Mammary epithelial cell (primary cell): ENCODE measurements at regions of chr3 and their contacts with region 1.

Region 1: GRCh38 chr3:102229062-102229655 is 205.7 kb upstream of the ZPLD1 start:
- DNase-seq: peak; percentile 71
- H3K4me3 ChIP-seq: no peak overlapping the region
- H3K27ac ChIP-seq: no peak overlapping the region
- H3K4me1 ChIP-seq: peaks cover 2% of the 10 kb centered on the region
- H3K27me3 ChIP-seq: no peaks in the 10 kb centered on the region
- CTCF ChIP-seq: peak; percentile 92 to 97

Region 2: DNA sequence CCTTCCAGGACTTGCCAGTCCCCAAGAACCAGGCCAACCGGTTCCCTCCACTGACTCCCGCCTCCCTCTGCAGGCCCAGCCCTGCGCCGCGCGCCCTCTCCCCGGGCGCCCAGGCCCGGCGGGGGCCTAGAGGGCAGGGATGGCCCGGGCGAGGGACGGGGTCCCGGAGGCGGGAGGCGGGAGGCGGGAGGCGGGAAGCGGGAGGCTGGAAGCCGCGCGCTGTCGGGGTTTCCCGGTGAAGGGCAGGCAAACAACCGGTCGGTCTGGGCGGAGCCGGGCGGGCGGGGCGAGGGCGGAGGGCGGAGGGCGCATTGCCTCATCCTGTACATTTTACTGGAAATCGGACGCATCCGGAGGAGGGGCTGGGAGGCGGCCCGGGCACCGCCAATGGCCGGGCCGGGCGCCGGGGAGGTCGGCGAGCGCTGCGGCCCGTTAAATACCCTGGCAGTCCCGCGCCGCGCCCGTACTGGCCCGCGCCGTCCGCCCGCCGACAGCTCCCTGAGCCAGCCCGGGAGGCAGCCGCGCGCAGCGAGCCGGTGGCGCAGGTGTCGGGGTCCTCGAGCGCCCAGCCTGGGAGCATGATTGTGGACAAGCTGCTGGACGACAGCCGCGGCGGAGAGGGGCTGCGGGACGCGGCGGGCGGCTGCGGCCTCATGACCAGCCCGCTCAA is 380.0 kb before region 1 on chr3 and contains the start of gene NFKBIZ:
- CTCF ChIA-PET with region 1: no interaction called
- dilution Hi-C with region 1: no loop called
- in situ Hi-C with region 1: no loop called
- intact Hi-C with region 1: loop called (anchors 1 kb)
- DNase-seq: peak; percentile 94
- H3K4me3 ChIP-seq: peak within 1 kb of the TSS; percentile 74 to 99 (median 87)
- H3K27ac ChIP-seq: peak within 1 kb of the TSS; percentile 92
- H3K4me1 ChIP-seq: peaks cover 20% of the 10 kb centered on the region
- H3K27me3 ChIP-seq: no peaks in the 10 kb centered on the region
- CTCF ChIP-seq: peak in 1 of 2 donors; percentile 15
- total RNA-seq, gene NFKBIZ: 27.0 to 85.8 TPM

Region 3: DNA sequence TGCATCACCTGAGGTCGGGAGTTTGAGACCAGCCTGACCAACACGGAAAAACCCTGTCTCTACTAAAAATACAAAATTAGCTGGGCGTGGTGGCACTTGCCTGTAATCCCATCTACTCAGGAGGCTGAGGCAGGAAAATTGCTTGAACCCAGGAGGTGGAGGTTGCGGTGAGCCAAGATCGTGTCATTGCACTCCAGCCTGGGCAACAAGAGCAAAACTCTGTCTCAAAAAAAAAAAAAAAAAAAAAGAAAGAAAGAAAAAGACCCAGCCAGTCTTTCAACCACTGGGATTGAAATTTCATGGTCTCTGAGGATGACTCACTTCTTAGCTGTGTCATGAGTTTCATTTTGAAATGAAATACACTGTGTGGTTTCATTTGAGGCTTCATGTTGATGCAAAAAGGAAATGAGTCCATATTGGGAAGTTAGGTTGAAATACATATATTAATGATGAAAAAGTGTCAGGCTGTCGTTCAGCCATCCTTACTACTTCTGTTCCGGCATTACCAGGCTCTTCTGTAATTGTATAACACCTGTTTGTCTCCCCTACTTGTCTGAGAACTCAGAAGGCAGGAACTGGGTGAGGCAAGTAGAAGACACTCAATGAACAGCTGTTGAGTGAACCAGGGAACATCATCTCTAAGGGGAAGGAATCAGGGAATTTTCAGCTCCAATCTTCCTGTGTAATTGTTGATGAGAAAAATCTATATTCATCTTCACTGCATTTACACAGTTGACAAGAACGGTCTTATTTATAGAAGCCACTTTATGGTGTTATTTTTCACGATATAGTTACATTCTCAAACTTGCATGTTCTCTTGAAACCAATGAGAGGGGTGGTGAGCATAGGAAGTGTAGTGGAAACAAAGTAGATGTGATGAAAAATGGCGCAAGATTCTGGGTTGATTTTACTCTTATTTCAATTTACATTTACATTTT is 292.5 kb before region 1 on chr3:
- CTCF ChIA-PET with region 1: interaction called, 8 read pairs
- dilution Hi-C with region 1: no loop called
- in situ Hi-C with region 1: no loop called
- intact Hi-C with region 1: loop called (anchors 1 kb)
- DNase-seq: peak; percentile 94
- H3K4me3 ChIP-seq: no peak overlapping the region
- H3K27ac ChIP-seq: peak overlapping the region; percentile 94
- H3K4me1 ChIP-seq: peaks cover 23% of the 10 kb centered on the region
- H3K27me3 ChIP-seq: no peaks in the 10 kb centered on the region
- CTCF ChIP-seq: no peak

Region 4: DNA sequence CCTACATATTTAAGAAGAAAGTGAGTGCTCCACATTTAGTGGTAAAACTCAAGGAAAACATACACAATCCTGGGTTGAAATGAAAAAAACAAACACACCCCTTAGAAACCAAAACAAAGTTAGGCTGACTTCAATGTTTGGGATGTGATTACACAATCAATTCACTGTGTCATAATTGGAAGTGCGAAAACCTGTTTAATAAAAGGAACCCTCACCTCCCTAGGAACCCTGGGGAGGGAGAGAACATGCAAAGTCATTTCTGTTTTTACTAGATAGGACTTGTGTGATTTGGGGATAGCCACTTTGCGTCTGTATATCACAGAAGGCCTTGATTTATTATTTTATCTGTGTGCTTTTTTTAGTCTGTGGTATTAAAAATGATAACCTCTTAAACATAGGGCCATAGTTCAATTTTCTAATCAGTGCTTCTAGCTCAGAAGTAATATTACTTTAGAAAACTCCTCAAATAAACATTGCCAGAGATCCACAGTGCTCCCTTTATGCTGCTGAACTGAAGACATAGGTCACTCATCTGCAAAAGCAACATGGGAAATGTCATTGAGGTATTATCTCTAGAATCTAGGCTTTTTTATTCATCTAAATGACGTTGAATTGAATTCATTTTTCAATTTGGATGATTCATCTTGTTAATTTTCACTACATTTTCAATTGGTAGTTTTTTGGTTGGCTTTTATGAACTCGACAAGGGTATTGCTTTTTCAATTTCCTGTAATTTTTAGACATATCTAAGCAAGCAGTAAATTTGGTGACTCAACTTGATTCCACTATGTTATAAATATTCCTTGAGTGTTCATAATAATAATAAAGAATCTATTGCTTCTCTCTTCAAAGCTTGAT is 104.6 kb before region 1 on chr3:
- CTCF ChIA-PET with region 1: no interaction called
- dilution Hi-C with region 1: no loop called
- in situ Hi-C with region 1: no loop called
- intact Hi-C with region 1: loop called (anchors 2 kb)
- DNase-seq: peak; percentile 94
- H3K4me3 ChIP-seq: no peak overlapping the region
- H3K27ac ChIP-seq: peak overlapping the region; percentile 99
- H3K4me1 ChIP-seq: peaks cover 19% of the 10 kb centered on the region
- H3K27me3 ChIP-seq: no peaks in the 10 kb centered on the region
- CTCF ChIP-seq: no peak

Region 5: DNA sequence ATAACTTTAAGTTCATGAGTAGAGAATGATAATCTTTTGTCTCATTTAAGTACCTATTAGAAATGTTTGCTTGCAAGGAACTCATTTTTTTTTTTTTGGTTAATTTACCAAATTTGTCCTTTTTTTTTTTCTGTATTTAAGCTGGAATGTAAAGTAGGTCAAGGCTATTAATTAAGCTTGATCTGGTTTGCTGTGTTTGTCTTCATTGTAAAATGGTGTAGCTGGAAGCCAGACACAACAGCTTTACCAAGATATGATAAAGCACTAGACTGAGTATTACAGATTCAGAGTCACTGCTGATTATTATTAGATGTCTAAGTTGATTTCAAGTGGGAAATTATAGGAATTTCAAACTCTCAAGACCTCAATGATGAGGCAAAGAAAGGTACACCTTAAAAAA is 190.6 kb after region 1 on chr3:
- CTCF ChIA-PET with region 1: interaction called, 11 read pairs
- dilution Hi-C with region 1: no loop called
- in situ Hi-C with region 1: no loop called
- intact Hi-C with region 1: no loop called
- DNase-seq: no peak
- H3K4me3 ChIP-seq: no peak overlapping the region
- H3K27ac ChIP-seq: no peak overlapping the region
- H3K4me1 ChIP-seq: no peaks in the 10 kb centered on the region
- H3K27me3 ChIP-seq: no peaks in the 10 kb centered on the region
- CTCF ChIP-seq: no peak

Region 6: GRCh38 chr3:102673271-102674115 is 444.3 kb after region 1 on chr3:
- CTCF ChIA-PET with region 1: no interaction called
- dilution Hi-C with region 1: no loop called
- in situ Hi-C with region 1: no loop called
- intact Hi-C with region 1: loop called (anchors 2 kb)
- DNase-seq: peak; percentile 25
- H3K4me3 ChIP-seq: no peak overlapping the region
- H3K27ac ChIP-seq: no peak overlapping the region
- H3K4me1 ChIP-seq: no peaks in the 10 kb centered on the region
- H3K27me3 ChIP-seq: peaks cover 5% of the 10 kb centered on the region
- CTCF ChIP-seq: peak; percentile 84 to 88